ENCODE measurements at regions of chr13 and their contacts with region 1.

Region 1: GRCh38 chr13:95301183-95301967 is at the start of gene ABCC4:
- DNase-seq: peak; percentile 72
- ATAC-seq: peak; percentile 82
- H3K4me3 ChIP-seq: peak within 1 kb of the TSS; percentile 78
- H3K27ac ChIP-seq: peak within 1 kb of the TSS; percentile 96
- H3K4me1 ChIP-seq: peaks cover 18% of the 10 kb centered on the region
- H3K27me3 ChIP-seq: no peaks in the 10 kb centered on the region
- CTCF ChIP-seq: no peak
- POLR2A ChIP-seq: peak; percentile 57; the same call in 1 of the 2 replicates
- RAD21 ChIP-seq: 0 out of 2 replicates have a peak, but pooled peaks have one; percentile 20
- total RNA-seq, gene ABCC4: 41.4 and 56.1 TPM in 2 replicates

Region 2: DNA sequence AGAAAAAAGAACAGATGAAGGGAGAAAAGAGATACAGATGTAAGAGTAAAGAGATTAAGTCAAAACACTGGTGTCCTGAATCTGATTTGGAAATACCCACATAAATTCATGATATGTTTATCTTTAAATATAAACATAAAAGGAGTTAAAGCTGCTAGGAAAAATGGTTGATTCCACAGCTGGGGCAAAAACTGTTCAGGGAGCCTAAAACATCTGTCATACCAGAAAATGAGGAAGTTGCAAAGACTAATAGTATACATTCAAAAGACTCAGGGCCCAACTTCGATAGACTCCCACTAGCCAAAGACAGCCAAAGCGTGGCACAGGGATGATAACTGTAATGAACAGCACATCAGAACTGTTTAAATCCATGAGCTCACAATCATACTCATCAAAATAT is 62.1 kb before region 1 on chr13:
- CTCF ChIA-PET with region 1: no interaction called
- POLR2A ChIA-PET with region 1: no interaction called
- dilution Hi-C with region 1: no loop called
- in situ Hi-C with region 1: no loop called
- intact Hi-C with region 1: loop called (anchors 2 kb)
- DNase-seq: peak; percentile 77
- ATAC-seq: peak; percentile 65
- H3K4me3 ChIP-seq: no peak overlapping the region
- H3K27ac ChIP-seq: peak overlapping the region; percentile 41; the same call in 1 of the 2 replicates
- H3K4me1 ChIP-seq: peaks cover 31% of the 10 kb centered on the region
- H3K27me3 ChIP-seq: no peaks in the 10 kb centered on the region
- CTCF ChIP-seq: no peak
- POLR2A ChIP-seq: no peak
- RAD21 ChIP-seq: no peak

Region 3: DNA sequence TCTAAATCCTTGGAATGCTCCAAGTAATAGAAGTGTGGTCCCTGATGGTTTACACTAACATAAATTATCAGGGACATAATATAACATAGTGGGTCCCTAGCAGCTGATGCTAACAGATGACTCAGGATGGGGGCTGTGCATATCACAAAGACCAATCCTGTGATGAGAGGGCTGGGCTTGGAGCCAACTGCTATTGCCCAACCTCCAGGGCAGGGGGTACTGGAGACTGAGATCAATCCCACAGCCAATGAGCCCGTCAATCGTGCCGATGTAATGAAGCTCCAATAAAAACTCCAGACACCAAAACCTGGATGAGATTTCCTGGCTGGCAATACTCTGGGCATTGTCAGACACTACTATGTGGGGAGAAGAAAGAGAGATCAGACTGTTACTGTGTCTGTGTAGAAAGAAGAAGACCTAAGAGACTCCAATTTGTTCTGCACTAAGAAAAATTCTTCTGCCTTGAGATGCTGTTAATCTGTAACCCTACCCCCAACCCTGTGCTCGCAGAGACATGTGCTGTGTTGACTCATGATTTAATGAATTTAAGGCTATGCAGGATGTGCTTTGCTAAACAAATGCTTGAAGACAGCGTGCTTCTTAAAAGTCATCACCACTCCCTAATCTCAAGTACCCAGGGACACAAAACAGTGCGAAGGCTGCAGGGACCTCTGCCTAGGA is 33.6 kb before region 1 on chr13:
- CTCF ChIA-PET with region 1: interaction called, 3 read pairs
- POLR2A ChIA-PET with region 1: interaction called, 5 read pairs
- dilution Hi-C with region 1: no loop called
- in situ Hi-C with region 1: no loop called
- intact Hi-C with region 1: loop called (anchors 1 kb)
- DNase-seq: peak; percentile 96
- ATAC-seq: peak; percentile 63
- H3K4me3 ChIP-seq: no peak overlapping the region
- H3K27ac ChIP-seq: peak overlapping the region; percentile 95
- H3K4me1 ChIP-seq: peaks cover 27% of the 10 kb centered on the region
- H3K27me3 ChIP-seq: no peaks in the 10 kb centered on the region
- CTCF ChIP-seq: no peak
- POLR2A ChIP-seq: no peak
- RAD21 ChIP-seq: no peak

Region 4: GRCh38 chr13:95276037-95276505 is 25.3 kb before region 1 on chr13:
- CTCF ChIA-PET with region 1: no interaction called
- POLR2A ChIA-PET with region 1: interaction called, 22 read pairs
- dilution Hi-C with region 1: no loop called
- in situ Hi-C with region 1: no loop called
- intact Hi-C with region 1: loop called (anchors 1 kb)
- DNase-seq: no peak
- ATAC-seq: no peak
- H3K4me3 ChIP-seq: no peak overlapping the region
- H3K27ac ChIP-seq: peak overlapping the region; percentile 98
- H3K4me1 ChIP-seq: peaks cover 43% of the 10 kb centered on the region
- H3K27me3 ChIP-seq: no peaks in the 10 kb centered on the region
- CTCF ChIP-seq: no peak
- POLR2A ChIP-seq: no peak
- RAD21 ChIP-seq: no peak

Region 5: DNA sequence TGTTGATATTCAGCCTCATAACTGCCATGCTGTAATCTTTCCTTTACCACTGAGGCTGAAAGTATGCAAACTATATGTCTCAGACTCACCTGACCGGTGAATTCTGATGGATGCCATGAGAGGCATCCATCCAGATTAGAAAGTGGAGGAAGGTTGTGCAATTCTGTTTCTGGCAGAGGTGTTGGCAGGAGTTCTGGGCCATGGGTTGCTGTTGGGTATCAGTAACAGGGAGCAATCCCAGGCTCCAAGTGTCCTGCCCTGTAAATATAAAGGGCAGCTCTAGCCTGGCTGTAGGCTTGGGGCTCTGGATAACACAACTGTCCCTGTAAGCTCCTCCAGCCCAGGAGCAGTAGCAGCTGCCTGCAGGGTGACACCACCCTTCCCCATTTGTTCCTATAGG is 77.2 kb after region 1 on chr13:
- CTCF ChIA-PET with region 1: interaction called, 7 read pairs
- POLR2A ChIA-PET with region 1: interaction called, 6 read pairs
- dilution Hi-C with region 1: no loop called
- in situ Hi-C with region 1: no loop called
- intact Hi-C with region 1: loop called (anchors 2 kb)
- DNase-seq: no peak
- ATAC-seq: no peak
- H3K4me3 ChIP-seq: no peak overlapping the region
- H3K27ac ChIP-seq: no peak overlapping the region
- H3K4me1 ChIP-seq: peaks cover 3% of the 10 kb centered on the region; the same call in 1 of the 2 replicates
- H3K27me3 ChIP-seq: peaks cover 3% of the 10 kb centered on the region; the same call in 1 of the 2 replicates
- CTCF ChIP-seq: no peak
- POLR2A ChIP-seq: no peak
- RAD21 ChIP-seq: no peak

Measured in IMR-90 (cell line).